GM10248 (cell line): ENCODE measurements at regions of chr5 and their contacts with region 1.

Region 1: DNA sequence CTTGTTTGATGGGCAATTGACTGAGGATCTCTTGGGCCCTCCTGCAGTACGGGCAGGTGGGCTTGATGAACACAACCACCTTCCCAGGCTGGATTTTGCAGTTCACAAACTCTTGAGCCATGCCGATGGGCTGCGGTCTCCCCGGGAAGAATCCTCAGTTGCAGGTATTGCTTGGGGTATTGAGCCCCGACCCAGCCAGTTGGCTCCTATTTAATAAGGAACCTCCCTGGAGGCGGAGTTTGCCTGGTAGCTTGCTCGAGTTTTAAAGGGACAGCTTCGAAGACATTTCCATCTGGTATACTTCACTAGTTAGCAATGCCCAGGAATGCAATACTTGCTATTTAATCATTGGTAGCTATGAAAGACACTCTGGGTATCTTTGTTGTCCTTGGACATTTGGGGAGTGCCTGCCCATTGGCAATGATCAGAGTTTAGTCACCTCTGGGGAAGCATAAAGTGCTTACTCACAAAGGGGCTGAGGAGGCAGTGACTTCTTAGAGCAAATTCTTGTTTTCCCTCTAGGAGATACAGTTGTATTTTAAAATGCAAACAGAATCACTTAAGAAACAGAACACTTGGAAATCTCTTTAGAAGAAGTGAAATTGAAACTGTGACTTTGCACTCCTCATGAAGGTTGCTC is at the start of gene GLRX:
- DNase-seq: peak; percentile 58
- CTCF ChIP-seq: no peak

Region 2: DNA sequence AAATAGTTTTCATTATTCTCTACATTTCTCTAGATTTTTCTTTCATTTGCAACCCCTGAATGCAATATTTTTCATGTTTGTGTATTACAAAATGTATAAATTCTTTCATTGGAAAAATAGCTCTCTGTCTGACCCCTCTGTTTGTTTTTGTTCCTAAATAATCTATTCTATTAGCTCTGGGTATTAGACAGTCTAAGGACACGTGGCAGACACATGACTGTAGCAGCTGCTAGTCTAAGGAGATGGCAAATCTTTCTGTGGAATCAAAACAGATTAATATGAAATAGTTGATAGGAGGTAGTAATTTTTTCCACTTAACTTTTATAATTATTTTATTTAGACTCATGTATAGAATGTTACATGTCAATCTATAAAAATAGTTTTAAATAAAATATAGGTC is 118.5 kb before region 1 on chr5:
- CTCF ChIA-PET with region 1: no interaction called
- POLR2A ChIA-PET with region 1: no interaction called
- DNase-seq: no peak
- CTCF ChIP-seq: no peak

Region 3: DNA sequence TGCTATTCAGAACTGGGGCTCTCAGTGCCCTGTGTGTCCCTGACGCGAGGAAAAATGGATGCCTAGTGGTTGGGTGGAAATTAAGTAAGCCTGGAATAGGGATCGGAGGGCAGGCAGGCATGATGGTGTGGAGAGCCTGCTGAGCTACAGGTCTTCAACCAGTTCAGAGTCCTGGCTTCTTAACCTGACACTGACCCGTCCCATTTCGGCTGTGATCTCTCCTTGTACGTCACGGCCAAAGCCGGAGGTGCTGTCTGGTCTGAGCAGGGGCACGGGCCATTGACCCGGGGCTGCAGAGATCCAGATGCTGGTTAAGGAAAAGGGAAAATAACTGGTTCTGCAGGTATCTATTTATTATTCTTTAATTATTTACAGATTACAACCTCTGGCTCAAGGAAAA is 63.7 kb before region 1 on chr5:
- CTCF ChIA-PET with region 1: no interaction called
- POLR2A ChIA-PET with region 1: no interaction called
- DNase-seq: no peak
- CTCF ChIP-seq: no peak

Region 4: GRCh38 chr5:95808686-95809413 is 13.8 kb before region 1 on chr5:
- CTCF ChIA-PET with region 1: interaction called, 68 read pairs
- POLR2A ChIA-PET with region 1: interaction called, 13 read pairs
- DNase-seq: peak; percentile 88
- CTCF ChIP-seq: no peak